Endothelial cell of umbilical vein (primary cell): ENCODE measurements at regions of chr3 and their contacts with region 1.

Region 1: GRCh38 chr3:11236595-11237461 is 35.4 kb upstream of the ATG7 start:
- DNase-seq: peak; percentile 61
- H3K4me3 ChIP-seq: no peak overlapping the region
- H3K27ac ChIP-seq: peak overlapping the region; percentile 40
- H3K4me1 ChIP-seq: peaks cover 23% of the 10 kb centered on the region
- H3K27me3 ChIP-seq: no peaks in the 10 kb centered on the region
- CTCF ChIP-seq: peak; percentile 75 to 78
- POLR2A ChIP-seq: no peak

Region 2: DNA sequence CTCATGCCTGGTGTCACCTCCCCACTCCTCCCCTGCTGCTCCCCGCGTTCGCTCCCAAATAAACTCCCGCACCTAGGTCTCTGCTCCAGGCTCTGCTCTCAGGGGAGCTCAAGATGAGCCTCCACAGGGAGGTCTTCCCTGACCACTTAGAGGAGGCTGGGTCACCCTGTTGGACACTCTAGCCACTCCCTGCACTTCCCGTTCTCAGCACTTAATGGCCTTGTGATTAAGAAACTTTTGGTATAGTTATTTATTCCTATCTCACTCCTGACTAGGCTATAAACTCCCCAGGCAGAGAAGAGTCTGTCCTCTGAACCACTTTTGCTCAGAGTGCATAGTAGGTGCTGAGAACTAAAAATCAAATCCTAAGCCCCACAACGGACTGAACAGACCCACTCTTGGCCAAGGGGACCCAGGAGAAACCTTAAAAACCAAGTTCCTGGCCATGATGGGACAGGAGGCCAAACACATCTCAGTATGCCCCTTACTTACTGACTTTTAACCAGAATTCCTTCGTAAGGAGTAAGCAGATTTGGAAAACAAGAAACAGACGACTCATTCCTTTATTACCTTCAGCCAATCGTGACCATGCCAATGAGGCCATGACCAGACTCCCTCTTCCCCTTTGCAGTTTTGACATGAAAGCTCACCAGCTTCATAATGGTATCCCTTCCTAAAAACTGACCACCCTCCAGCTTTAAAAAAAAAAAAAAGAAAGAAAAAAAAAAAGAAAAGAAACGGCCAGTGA is 151.6 kb before region 1 on chr3:
- CTCF ChIA-PET with region 1: no interaction called
- POLR2A ChIA-PET with region 1: no interaction called
- dilution Hi-C with region 1: no loop called
- intact Hi-C with region 1: no loop called
- DNase-seq: no peak
- H3K4me3 ChIP-seq: no peak overlapping the region
- H3K27ac ChIP-seq: no peak overlapping the region
- H3K4me1 ChIP-seq: no peaks in the 10 kb centered on the region
- H3K27me3 ChIP-seq: peaks cover 0 to 2% of the 10 kb centered on the region in 2 experiments
- CTCF ChIP-seq: no peak
- POLR2A ChIP-seq: no peak

Region 3: GRCh38 chr3:11221818-11222415 is 14.9 kb before region 1 on chr3:
- CTCF ChIA-PET with region 1: interaction called, 5 read pairs
- POLR2A ChIA-PET with region 1: no interaction called
- dilution Hi-C with region 1: no loop called
- intact Hi-C with region 1: loop called (anchors 1 kb)
- DNase-seq: no peak
- H3K4me3 ChIP-seq: no peak overlapping the region
- H3K27ac ChIP-seq: no peak overlapping the region
- H3K4me1 ChIP-seq: peaks cover 40% of the 10 kb centered on the region
- H3K27me3 ChIP-seq: no peaks in the 10 kb centered on the region
- CTCF ChIP-seq: peak; percentile 5 to 11
- POLR2A ChIP-seq: no peak

Region 4: GRCh38 chr3:11328196-11328945 is 91.5 kb after region 1 on chr3:
- CTCF ChIA-PET with region 1: interaction called, 5 read pairs
- POLR2A ChIA-PET with region 1: no interaction called
- dilution Hi-C with region 1: no loop called
- intact Hi-C with region 1: loop called (anchors 1 kb)
- DNase-seq: peak; percentile 81
- H3K4me3 ChIP-seq: no peak overlapping the region
- H3K27ac ChIP-seq: peak overlapping the region; percentile 56
- H3K4me1 ChIP-seq: peaks cover 40% of the 10 kb centered on the region
- H3K27me3 ChIP-seq: no peaks in the 10 kb centered on the region
- CTCF ChIP-seq: no peak
- POLR2A ChIP-seq: no peak